H1 (cell line): ENCODE measurements at regions of chr2 and their contacts with region 1.

Region 1: GRCh38 chr2:219402665-219403515 is 15.2 kb upstream of the DNPEP start:
- DNase-seq: peak in 1 of 2 experiments; percentile 67
- H3K4me3 ChIP-seq: no peak overlapping the region
- H3K27ac ChIP-seq: no peak overlapping the region
- H3K4me1 ChIP-seq: peaks cover 3 to 22% (median 8%) of the 10 kb centered on the region in 4 experiments
- H3K27me3 ChIP-seq: peaks cover 0 to 2% (median 0%) of the 10 kb centered on the region in 4 experiments; a peak in 1 of 7 replicates
- CTCF ChIP-seq: peak; percentile 85 to 96 (median 93)
- EP300 ChIP-seq: no peak
- POLR2A ChIP-seq: no peak
- RAD21 ChIP-seq: peak; percentile 94 to 96

Region 2: GRCh38 chr2:219352448-219353023 is 50.4 kb before region 1 on chr2:
- CTCF ChIA-PET with region 1: interaction called, 13 read pairs
- POLR2A ChIA-PET with region 1: no interaction called
- DNase-seq: peak; percentile 43 to 94
- H3K4me3 ChIP-seq: no peak overlapping the region
- H3K27ac ChIP-seq: no peak overlapping the region
- H3K4me1 ChIP-seq: peaks cover 0 to 3% (median 0%) of the 10 kb centered on the region in 4 experiments; a peak in 1 of 7 replicates
- H3K27me3 ChIP-seq: peaks cover 4 to 13% (median 8%) of the 10 kb centered on the region in 4 experiments
- CTCF ChIP-seq: peak; percentile 59 to 85 (median 81)
- EP300 ChIP-seq: no peak
- POLR2A ChIP-seq: no peak
- RAD21 ChIP-seq: peak; percentile 74 to 77

Region 3: DNA sequence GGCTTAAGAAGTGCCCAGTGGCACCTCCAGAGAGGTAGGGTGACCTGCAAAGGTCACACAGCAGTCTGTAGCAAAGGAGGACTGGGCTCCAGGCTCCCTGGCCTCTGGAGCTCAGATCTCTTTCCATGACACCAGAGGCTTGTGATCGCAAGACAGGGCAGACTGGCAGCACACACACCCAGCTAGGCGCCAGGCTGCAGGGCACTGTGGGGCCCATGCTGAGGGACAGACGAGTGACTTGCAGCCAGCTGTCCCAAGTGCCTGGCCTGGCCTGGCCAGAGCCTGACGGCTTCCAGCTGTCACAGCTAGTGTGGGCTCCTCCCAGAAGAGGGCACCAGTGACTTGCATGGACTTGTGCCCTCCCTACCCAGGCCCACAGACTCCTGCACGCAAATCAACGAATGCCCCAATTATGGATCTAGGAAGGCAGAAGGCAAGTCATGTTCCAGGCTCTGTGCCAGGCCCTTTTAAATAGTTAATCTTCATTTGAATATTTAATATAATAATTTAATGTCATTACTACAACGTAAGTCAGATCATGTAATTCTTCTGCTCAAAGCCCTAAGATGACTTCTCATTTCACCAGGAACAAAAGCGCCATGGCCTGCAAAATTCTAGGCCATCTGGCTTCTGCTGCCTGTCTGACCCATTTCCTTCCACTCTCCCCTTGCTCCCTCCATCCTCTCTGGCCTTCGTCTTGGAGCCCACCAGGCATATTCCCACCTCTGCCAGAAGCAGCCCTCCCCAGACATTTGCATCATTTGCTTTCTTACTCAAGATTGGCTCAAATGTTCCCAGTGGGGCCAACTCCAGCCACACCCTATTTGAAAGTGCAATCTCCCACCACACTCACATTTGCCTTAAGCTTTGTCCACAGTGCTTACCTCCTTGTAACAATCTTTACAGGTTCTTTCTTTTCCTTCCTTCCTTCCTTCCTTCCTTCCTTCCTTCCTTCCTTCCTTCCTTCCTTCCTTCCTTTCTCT is 28.0 kb after region 1 on chr2:
- CTCF ChIA-PET with region 1: interaction called, 186 read pairs
- POLR2A ChIA-PET with region 1: interaction called, 30 read pairs
- DNase-seq: no peak
- H3K4me3 ChIP-seq: no peak overlapping the region
- H3K27ac ChIP-seq: no peak overlapping the region
- H3K4me1 ChIP-seq: peaks cover 0 to 13% (median 7%) of the 10 kb centered on the region in 4 experiments; a peak in 5 of 7 replicates
- H3K27me3 ChIP-seq: peaks cover 0 to 13% (median 10%) of the 10 kb centered on the region in 4 experiments; a peak in 6 of 7 replicates
- CTCF ChIP-seq: peak; percentile 49 to 50 (median 49)
- EP300 ChIP-seq: no peak
- POLR2A ChIP-seq: no peak
- RAD21 ChIP-seq: peak; percentile 44 to 63

Region 4: GRCh38 chr2:219459460-219460311 is 56.8 kb after region 1 on chr2:
- CTCF ChIA-PET with region 1: interaction called, 73 read pairs
- POLR2A ChIA-PET with region 1: interaction called, 4 read pairs
- DNase-seq: peak in 1 of 2 experiments; percentile 94
- H3K4me3 ChIP-seq: peak overlapping the region in 1 of 4 experiments; percentile 46; a peak in 1 of 8 replicates
- H3K27ac ChIP-seq: no peak overlapping the region
- H3K4me1 ChIP-seq: peaks cover 9 to 23% (median 21%) of the 10 kb centered on the region in 4 experiments
- H3K27me3 ChIP-seq: no peaks in the 10 kb centered on the region; a peak in 1 of 7 replicates
- CTCF ChIP-seq: peak in 2 of 3 experiments; percentile 88 to 98; a peak in 3 of 4 replicates
- EP300 ChIP-seq: no peak
- POLR2A ChIP-seq: no peak
- RAD21 ChIP-seq: peak; percentile 68 to 75

Region 5: DNA sequence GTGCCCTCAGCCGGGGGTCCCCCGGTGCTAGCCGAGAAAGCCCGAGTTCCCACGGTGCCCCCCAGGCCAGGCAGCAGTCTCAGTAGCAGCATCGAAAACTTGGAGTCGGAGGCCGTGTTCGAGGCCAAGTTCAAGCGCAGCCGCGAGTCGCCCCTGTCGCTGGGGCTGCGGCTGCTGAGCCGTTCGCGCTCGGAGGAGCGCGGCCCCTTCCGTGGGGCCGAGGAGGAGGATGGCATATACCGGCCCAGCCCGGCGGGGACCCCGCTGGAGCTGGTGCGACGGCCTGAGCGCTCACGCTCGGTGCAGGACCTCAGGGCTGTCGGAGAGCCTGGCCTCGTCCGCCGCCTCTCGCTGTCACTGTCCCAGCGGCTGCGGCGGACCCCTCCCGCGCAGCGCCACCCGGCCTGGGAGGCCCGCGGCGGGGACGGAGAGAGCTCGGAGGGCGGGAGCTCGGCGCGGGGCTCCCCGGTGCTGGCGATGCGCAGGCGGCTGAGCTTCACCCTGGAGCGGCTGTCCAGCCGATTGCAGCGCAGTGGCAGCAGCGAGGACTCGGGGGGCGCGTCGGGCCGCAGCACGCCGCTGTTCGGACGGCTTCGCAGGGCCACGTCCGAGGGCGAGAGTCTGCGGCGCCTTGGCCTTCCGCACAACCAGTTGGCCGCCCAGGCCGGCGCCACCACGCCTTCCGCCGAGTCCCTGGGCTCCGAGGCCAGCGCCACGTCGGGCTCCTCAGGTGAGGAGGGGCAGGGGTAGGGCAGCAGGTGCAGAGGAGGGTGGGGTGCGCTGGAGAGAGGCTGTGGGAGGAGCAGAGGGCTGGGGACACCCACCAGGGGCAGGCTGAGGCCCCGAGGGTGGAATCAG is 81.7 kb after region 1 on chr2:
- CTCF ChIA-PET with region 1: interaction called, 74 read pairs
- POLR2A ChIA-PET with region 1: interaction called, 3 read pairs
- DNase-seq: peak in 1 of 2 experiments; percentile 68
- H3K4me3 ChIP-seq: peak overlapping the region in 3 of 4 experiments; percentile 26 to 56 (median 32); a peak in 6 of 8 replicates
- H3K27ac ChIP-seq: no peak overlapping the region
- H3K4me1 ChIP-seq: peaks cover 6 to 36% (median 28%) of the 10 kb centered on the region in 4 experiments
- H3K27me3 ChIP-seq: peaks cover 20 to 49% (median 36%) of the 10 kb centered on the region in 4 experiments
- CTCF ChIP-seq: no peak; a peak in 1 of 4 replicates
- EP300 ChIP-seq: no peak
- POLR2A ChIP-seq: no peak
- RAD21 ChIP-seq: no peak

Region 6: GRCh38 chr2:219509780-219510511 is 107.1 kb after region 1 on chr2:
- CTCF ChIA-PET with region 1: interaction called, 40 read pairs
- POLR2A ChIA-PET with region 1: no interaction called
- DNase-seq: peak in 1 of 2 experiments; percentile 91
- H3K4me3 ChIP-seq: peak overlapping the region; percentile 27 to 56 (median 50); a peak in 7 of 8 replicates
- H3K27ac ChIP-seq: no peak overlapping the region
- H3K4me1 ChIP-seq: peaks cover 7 to 76% (median 65%) of the 10 kb centered on the region in 4 experiments
- H3K27me3 ChIP-seq: peaks cover 2 to 37% (median 34%) of the 10 kb centered on the region in 4 experiments
- CTCF ChIP-seq: peak in 2 of 3 experiments; percentile 70 to 89; a peak in 3 of 4 replicates
- EP300 ChIP-seq: no peak
- POLR2A ChIP-seq: no peak
- RAD21 ChIP-seq: peak; percentile 38 to 57; a peak in 3 of 4 replicates

Region 7: DNA sequence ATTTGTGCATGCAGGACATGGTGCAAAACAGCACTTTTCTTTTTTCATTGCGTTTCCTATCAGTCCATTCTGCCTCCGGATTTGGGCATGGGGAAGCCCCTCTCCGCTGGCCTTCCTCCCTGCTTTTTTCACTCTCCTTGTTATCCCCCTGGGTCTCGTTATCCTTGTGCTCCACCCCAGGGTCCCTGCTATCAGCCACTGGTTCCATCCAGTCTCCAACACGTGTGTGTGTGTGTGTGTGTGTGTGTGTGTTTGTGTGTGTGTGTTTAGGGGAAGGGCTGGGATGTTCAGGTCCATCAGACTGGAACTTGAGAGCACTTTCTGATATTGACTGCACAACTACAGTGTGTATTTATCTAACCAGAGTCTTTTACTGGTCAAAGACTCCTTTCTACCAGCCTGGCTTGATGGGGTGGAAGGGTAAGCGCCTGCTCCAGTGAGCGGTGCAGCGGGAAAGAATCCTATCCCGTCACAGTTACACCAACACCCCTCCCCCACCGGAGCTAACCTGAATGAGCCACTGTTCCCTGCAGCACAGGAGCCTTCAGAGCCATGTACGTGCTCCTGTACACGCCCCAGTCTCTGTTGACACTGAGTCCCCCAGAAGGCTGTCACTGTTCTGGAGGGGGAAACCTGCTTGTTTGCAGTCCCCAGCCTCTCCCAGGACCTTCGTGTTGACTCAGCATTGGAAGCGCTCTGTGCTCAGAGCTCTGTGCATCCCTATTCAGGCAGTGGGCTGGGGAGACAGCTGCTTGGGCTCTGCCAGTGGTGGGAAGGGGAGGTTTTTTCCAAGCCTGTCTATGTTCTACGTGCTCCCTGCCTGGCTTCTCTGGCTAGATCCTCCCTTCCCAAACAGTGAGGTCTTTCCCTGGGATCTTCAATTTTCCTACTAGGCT is 173.9 kb after region 1 on chr2:
- CTCF ChIA-PET with region 1: no interaction called
- POLR2A ChIA-PET with region 1: no interaction called
- DNase-seq: peak in 1 of 2 experiments; percentile 78
- H3K4me3 ChIP-seq: peak overlapping the region in 1 of 4 experiments; percentile 40; a peak in 2 of 8 replicates
- H3K27ac ChIP-seq: no peak overlapping the region
- H3K4me1 ChIP-seq: peaks cover 7 to 26% (median 21%) of the 10 kb centered on the region in 4 experiments
- H3K27me3 ChIP-seq: no peaks in the 10 kb centered on the region; a peak in 1 of 7 replicates
- CTCF ChIP-seq: no peak
- EP300 ChIP-seq: no peak
- POLR2A ChIP-seq: peak in 1 of 2 experiments; percentile 38; a peak in 1 of 3 replicates
- RAD21 ChIP-seq: no peak